ENCODE measurements at regions of chr19 and their contacts with region 1.

Region 1: DNA sequence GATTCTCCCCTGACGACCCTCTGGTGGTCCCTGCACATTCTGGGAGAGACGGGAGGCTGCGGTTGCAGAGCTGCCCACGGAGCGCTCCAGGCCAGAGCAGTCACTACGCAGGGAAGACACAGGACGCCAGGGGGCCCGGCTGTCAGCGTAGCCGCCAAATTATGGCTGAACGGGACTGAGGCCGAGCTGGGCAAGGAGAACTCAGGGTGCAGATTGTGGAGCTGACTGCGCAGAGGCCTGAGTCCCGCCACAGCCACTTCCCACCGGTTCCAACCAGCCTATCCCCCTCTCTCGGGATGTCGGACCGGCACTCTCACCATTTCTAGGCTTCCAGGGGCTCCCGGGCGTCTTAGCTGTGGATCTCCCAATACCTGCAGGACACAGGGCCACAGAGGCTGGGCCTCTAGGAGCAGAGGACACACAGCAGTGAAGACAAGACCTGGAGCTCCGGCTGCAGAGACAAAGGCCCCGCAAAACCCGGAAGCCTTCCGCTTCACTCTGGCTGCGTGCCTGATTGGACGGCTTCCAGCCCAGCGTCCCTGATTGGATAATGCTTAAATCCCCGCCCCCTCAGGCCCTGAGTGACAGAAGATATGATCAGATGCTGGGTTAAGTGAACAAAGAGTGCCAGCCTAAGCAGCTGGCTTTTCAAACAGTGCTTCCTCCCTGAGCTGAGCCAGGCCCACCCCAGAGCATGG is at the start of gene ZNF737:
- DNase-seq: peak; percentile 88
- H3K4me3 ChIP-seq: peak within 1 kb of the TSS; percentile 58 to 72
- H3K27ac ChIP-seq: peak within 1 kb of the TSS; percentile 69 to 86
- H3K4me1 ChIP-seq: no peaks in the 10 kb centered on the region; a peak in 1 of 4 replicates
- H3K27me3 ChIP-seq: no peaks in the 10 kb centered on the region
- CTCF ChIP-seq: peak; percentile 33
- EP300 ChIP-seq: no peak
- RAD21 ChIP-seq: peak; percentile 4; the same call in 1 of the 2 replicates
- polyA plus RNA-seq, gene ZNF737: 2.5 and 4.2 TPM in 2 replicates

Region 2: DNA sequence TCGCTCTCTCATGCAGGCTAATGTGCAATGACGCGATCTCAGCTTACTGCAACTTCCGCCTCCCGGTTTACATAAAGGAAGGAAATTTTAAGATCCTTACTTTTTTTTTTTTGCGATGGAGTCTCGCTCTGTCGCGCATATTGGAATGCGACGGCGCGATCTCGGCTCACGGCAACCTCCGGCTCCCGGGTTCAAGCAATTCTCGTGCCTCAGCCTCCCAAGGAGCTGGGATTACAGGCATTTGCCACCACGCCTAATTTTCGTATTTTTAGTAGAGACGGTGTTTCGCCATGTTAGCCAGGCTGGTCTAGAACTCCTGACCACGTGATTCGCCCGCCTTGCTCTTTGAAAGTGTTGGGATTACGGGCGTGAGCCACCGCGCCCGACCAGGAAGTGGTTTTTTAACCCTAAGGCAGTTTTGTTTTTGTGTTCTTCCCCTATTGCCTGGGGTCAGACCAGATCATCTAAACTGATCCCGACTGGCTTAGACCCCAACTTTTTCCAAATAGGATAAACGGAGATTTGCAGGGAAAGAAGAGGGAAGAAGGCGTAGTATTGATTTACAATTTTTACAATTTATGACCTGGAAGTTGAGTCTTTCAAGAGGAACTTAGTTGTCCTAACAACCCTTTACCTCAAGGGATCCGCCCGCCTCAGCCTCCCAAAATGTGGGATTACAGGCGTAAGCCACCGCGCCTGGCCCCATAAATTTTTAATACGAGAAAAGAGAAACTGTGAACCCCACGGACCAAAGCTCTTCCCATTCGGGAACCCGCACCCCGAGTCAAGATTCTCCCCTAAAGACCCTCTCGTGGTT is 141.9 kb before region 1 on chr19:
- CTCF ChIA-PET with region 1: no interaction called
- POLR2A ChIA-PET with region 1: interaction called, 15 read pairs
- DNase-seq: peak; percentile 15
- H3K4me3 ChIP-seq: peak overlapping the region; percentile 54 to 58
- H3K27ac ChIP-seq: peak overlapping the region; percentile 42 to 67
- H3K4me1 ChIP-seq: no peaks in the 10 kb centered on the region
- H3K27me3 ChIP-seq: no peaks in the 10 kb centered on the region
- CTCF ChIP-seq: no peak
- EP300 ChIP-seq: no peak
- RAD21 ChIP-seq: no peak

Region 3: DNA sequence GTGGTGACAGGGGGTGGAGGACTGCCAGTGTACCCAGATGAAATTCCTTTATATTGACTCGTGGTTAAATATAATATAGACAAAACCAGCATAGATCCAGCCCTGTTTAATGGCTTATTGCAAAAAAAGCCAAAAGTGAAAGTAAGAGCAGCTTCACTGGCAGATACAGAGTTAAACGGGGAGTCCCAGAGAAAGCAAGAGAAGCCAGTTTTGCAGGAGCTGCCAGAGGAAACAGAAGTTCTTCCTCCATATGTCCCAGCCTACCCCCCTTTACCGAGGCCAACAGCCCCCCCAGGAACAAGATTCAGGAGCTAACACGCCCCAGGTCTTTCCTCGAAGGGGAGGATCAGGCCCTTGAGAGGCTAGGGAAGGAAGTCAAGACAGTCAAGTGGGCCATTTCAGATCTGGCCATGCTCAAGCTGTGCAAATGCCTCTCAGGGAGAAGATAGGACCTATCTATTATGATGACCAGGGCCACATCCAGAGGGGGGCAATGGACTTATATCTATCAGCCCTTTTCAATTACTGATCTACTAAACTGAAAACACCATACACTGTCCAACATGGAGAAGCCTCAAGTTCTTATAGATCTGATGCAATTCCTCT is 47.3 kb after region 1 on chr19:
- CTCF ChIA-PET with region 1: no interaction called
- POLR2A ChIA-PET with region 1: no interaction called
- DNase-seq: no peak
- H3K4me3 ChIP-seq: peak overlapping the region in 1 of 2 experiments; percentile 53; a peak in 1 of 4 replicates
- H3K27ac ChIP-seq: no peak overlapping the region
- H3K4me1 ChIP-seq: no peaks in the 10 kb centered on the region; a peak in 1 of 4 replicates
- H3K27me3 ChIP-seq: no peaks in the 10 kb centered on the region
- CTCF ChIP-seq: no peak
- EP300 ChIP-seq: no peak
- RAD21 ChIP-seq: no peak

Region 4: DNA sequence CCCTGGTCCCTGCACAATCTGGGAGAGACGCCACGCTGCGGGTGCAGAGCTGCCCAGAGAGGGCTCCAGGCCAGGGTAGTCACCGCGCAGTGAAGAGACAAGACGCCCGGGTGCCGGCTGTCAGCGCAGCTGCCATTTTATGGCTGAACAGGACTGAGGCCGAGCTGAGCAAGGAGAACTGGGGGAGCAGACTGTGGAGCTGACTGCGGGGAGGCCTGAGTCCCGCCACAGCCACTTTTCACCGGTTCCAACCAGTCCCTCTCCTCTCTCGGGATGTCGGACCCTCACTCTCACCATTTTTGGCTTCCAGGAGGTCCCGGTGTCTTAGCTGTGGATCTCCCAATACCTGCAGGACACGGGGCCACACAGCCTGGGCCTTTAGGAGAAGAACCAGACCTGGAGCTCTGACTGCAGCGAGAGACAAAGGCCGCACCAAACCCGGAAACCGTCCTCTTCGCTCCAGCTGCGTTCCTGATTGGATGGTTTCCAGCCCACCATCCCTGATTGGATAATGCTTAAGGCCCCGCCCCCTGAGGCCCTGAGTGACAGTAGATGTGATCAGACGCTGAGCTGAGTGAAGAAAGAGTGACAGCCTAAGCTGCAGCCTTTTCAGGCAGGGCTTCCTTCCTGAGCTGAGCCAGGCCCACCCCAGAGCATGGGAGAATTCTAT is 95.8 kb after region 1 on chr19 and contains the start of gene ZNF626:
- CTCF ChIA-PET with region 1: interaction called, 4 read pairs
- POLR2A ChIA-PET with region 1: interaction called, 18 read pairs
- DNase-seq: peak; percentile 89
- H3K4me3 ChIP-seq: peak within 1 kb of the TSS; percentile 64 to 80
- H3K27ac ChIP-seq: peak within 1 kb of the TSS; percentile 66 to 76
- H3K4me1 ChIP-seq: peaks cover 0 to 6% of the 10 kb centered on the region in 2 experiments; a peak in 1 of 4 replicates
- H3K27me3 ChIP-seq: no peaks in the 10 kb centered on the region
- CTCF ChIP-seq: no peak
- EP300 ChIP-seq: no peak
- RAD21 ChIP-seq: no peak
- polyA plus RNA-seq, gene ZNF626: 2.2 and 3.2 TPM in 2 replicates

Region 5: GRCh38 chr19:20923077-20923871 is 357.8 kb after region 1 on chr19 and contains the start of gene ZNF85:
- CTCF ChIA-PET with region 1: no interaction called
- POLR2A ChIA-PET with region 1: interaction called, 10 read pairs
- DNase-seq: peak; percentile 80
- H3K4me3 ChIP-seq: peak within 1 kb of the TSS; percentile 62 to 96
- H3K27ac ChIP-seq: peak within 1 kb of the TSS; percentile 73 to 88
- H3K4me1 ChIP-seq: peaks cover 0 to 2% of the 10 kb centered on the region in 2 experiments; a peak in 2 of 4 replicates
- H3K27me3 ChIP-seq: no peaks in the 10 kb centered on the region
- CTCF ChIP-seq: no peak
- EP300 ChIP-seq: no peak
- RAD21 ChIP-seq: no peak
- polyA plus RNA-seq, gene ZNF85: 2.0 and 2.9 TPM in 2 replicates

Measured in SK-N-SH (cell line).